Activated T-helper 1 cell treated with anti-CD3 and anti-CD28 coated beads, Interleukin-12 subunit alpha, Interleukin-12 subunit beta, Interleukin-2, Interleukin-4 antibody, amounts not matched to agents 30 ng/mL and 10 ng/mL and 1 ng/mL, durations not matched to agents 14 hours and 24 hours and 36 hours (primary cell): ENCODE measurements at regions of chr9 and their contacts with region 1.

Region 1: DNA sequence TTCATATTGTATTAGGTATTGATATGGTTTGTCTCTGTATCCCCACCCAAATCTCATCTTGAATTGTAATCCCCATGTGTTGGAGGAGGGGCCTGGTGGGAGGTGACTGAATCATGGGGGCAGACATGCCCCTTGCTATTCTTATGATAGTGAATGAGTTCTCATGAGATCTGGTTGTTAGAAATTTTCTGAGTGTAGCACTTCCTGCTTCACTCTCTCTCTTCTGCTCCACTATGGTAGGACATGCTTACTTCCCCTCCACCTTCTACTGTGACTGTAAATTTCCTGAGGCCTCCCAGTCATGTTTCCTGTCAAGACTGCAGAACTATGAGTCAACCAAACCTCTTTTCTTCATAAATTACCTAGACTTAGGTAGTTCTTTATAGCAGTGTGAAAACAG is 187.4 kb upstream of the SLC24A2 start:
- DNase-seq: peak; percentile 47
- H3K4me3 Mint-ChIP-seq: peak overlapping the region; percentile 1
- H3K27ac Mint-ChIP-seq: peak overlapping the region; percentile 92
- H3K4me1 Mint-ChIP-seq: peaks cover 51% of the 10 kb centered on the region
- H3K27me3 Mint-ChIP-seq: no peaks in the 10 kb centered on the region

Region 2: GRCh38 chr9:19901586-19901985 is 74.6 kb before region 1 on chr9:
- intact Hi-C with region 1: no loop called
- DNase-seq: no peak
- H3K4me3 Mint-ChIP-seq: no peak overlapping the region
- H3K27ac Mint-ChIP-seq: no peak overlapping the region
- H3K4me1 Mint-ChIP-seq: no peaks in the 10 kb centered on the region
- H3K27me3 Mint-ChIP-seq: no peaks in the 10 kb centered on the region

Region 3: GRCh38 chr9:19925817-19926503 is 50.3 kb before region 1 on chr9:
- intact Hi-C with region 1: loop called (anchors 1 kb)
- DNase-seq: peak; percentile 79
- H3K4me3 Mint-ChIP-seq: peak overlapping the region; percentile 65
- H3K27ac Mint-ChIP-seq: peak overlapping the region; percentile 2
- H3K4me1 Mint-ChIP-seq: peaks cover 28% of the 10 kb centered on the region
- H3K27me3 Mint-ChIP-seq: peaks cover 2% of the 10 kb centered on the region

Region 4: DNA sequence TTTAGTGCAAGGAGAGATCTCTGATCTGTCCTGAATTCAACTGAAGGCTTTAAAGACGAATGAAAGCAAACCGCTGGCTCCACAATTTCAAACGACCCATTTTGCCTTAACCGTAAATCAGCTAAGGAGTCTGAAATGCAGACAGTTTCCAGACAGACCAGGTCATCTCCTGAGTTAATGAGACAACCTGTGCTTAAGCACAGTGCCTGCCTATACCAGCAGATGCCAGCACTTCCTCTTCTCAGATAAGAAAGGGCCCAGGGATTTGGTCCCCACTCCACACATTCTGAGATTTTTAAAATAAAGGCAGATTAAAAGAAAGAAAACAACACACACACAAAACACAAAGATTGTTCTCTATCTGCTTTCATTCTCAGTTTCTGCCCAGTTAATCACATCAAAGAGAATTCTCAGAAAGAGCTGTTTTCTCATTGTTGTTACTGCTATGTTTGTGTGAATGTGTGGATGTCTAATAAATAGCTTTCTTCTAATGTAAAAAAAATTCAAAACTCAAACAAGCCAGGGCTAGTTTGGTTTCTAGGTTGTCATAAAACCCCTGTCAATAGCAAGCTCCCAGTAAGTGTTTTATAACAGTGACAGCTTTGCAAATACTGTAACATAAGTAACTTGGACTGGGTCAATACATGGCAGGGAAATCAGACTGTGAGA is 29.7 kb before region 1 on chr9:
- intact Hi-C with region 1: loop called (anchors 1 kb)
- DNase-seq: no peak
- H3K4me3 Mint-ChIP-seq: no peak overlapping the region
- H3K27ac Mint-ChIP-seq: no peak overlapping the region
- H3K4me1 Mint-ChIP-seq: peaks cover 22% of the 10 kb centered on the region
- H3K27me3 Mint-ChIP-seq: peaks cover 13% of the 10 kb centered on the region

Region 5: DNA sequence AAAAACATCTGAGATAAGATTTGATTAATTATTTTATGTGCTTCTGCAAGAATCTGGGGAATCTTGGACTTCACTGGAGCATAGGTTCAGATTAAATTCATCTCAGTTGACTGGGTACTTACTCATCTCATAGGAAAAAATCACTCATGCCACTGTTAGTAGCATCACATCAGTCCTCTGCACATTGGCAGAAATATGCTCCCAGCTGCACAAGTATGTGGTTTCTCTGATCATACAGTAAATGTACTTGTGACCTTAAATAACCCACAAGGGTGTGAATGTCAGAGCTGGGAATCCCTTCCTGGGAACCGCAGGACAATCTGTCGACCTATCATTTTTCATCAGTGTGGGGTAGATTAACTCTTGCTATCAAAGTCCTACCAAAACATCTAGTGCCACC is 16.3 kb after region 1 on chr9:
- intact Hi-C with region 1: loop called (anchors 1 kb)
- DNase-seq: no peak
- H3K4me3 Mint-ChIP-seq: no peak overlapping the region
- H3K27ac Mint-ChIP-seq: peak overlapping the region; percentile 81
- H3K4me1 Mint-ChIP-seq: peaks cover 57% of the 10 kb centered on the region
- H3K27me3 Mint-ChIP-seq: no peaks in the 10 kb centered on the region

Region 6: GRCh38 chr9:20043035-20043434 is 66.8 kb after region 1 on chr9:
- intact Hi-C with region 1: loop called (anchors 2 kb)
- DNase-seq: no peak
- H3K4me3 Mint-ChIP-seq: peak overlapping the region; percentile 78
- H3K27ac Mint-ChIP-seq: peak overlapping the region; percentile 79
- H3K4me1 Mint-ChIP-seq: peaks cover 45% of the 10 kb centered on the region
- H3K27me3 Mint-ChIP-seq: no peaks in the 10 kb centered on the region

Region 7: DNA sequence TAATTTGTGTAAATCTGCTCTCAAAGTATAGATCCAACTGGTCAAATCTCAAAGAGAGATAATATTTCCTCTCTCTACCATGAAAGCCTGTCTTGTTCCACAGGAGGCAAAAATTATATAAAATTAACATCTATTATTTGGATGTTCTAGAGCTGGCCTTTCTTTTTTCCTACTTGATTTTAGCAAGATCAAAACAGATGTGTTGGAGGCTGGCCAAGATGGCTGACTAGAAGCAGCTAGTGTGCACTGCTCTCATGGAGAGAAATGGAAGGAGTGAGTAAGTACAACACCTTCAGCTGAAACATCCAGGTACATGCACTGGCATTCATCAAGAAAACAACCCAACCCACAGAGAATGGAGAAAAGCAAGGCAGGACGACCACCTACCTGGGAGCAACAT is 111.3 kb after region 1 on chr9:
- intact Hi-C with region 1: no loop called
- DNase-seq: no peak
- H3K4me3 Mint-ChIP-seq: no peak overlapping the region
- H3K27ac Mint-ChIP-seq: no peak overlapping the region
- H3K4me1 Mint-ChIP-seq: no peaks in the 10 kb centered on the region
- H3K27me3 Mint-ChIP-seq: peaks cover 4% of the 10 kb centered on the region

Region 8: DNA sequence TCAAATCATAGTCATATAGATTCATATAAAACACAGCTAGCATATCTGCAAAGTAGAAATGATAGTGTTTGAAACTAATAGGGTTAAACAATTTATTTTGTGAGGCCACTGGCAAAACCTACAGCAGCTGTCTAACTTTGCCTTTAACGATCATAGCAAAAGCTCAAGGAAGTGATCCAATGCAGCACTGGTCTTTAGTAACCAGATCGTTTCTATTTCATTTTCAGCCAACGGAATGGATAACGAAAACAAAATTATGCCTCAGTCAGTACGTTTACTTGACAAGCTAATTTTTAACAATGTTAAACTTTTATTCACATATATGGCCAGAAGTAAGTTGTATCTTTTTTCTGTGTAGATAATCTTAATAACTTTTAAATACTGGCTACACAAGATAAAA is 628.3 kb after region 1 on chr9:
- intact Hi-C with region 1: loop called (anchors 5 kb)
- DNase-seq: no peak
- H3K4me3 Mint-ChIP-seq: peak overlapping the region; percentile 67
- H3K27ac Mint-ChIP-seq: peak overlapping the region; percentile 49
- H3K4me1 Mint-ChIP-seq: peaks cover 71% of the 10 kb centered on the region
- H3K27me3 Mint-ChIP-seq: no peaks in the 10 kb centered on the region